ENCODE measurements at regions of chr10 and their contacts with region 1.

Region 1: DNA sequence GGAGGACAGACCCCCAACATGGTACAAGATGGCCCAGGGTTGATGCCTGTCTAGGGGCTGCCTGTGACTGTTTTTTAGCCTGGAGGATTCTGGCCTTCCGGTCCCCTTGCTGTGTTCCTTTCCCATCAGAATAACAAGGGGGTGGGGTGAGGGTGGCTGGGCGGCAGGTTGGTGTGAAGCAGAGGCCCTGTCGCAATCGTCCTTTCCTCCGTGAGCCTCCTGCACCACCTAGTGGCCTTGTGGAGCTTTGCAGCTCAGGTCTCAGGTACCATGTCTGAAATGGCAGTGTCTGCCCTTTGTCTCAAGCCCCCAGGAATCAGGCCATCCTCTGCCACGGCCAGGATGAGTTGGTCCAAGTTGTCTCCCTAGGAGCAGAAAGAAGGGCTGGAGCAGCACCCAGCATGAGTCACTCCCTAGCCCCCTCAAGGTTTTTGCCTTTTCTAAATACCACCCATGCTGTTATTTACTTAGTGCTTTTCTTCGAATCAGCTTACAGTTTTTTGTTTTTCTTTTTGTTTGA is 24.2 kb downstream of the TACR2 start:
- DNase-seq: peak; percentile 64 to 90 (median 81)
- ATAC-seq: peak; percentile 100
- H3K4me3 ChIP-seq: no peak overlapping the region
- H3K4me3 Mint-ChIP-seq: no peak overlapping the region
- H3K27ac ChIP-seq: peak overlapping the region in 1 of 2 experiments; percentile 24
- H3K27ac Mint-ChIP-seq: peak overlapping the region; percentile 62
- H3K4me1 ChIP-seq: peaks cover 5% of the 10 kb centered on the region
- H3K4me1 Mint-ChIP-seq: peaks cover 19% of the 10 kb centered on the region
- H3K27me3 ChIP-seq: no peaks in the 10 kb centered on the region
- H3K27me3 Mint-ChIP-seq: no peaks in the 10 kb centered on the region
- CTCF ChIP-seq: peak; percentile 87

Region 2: DNA sequence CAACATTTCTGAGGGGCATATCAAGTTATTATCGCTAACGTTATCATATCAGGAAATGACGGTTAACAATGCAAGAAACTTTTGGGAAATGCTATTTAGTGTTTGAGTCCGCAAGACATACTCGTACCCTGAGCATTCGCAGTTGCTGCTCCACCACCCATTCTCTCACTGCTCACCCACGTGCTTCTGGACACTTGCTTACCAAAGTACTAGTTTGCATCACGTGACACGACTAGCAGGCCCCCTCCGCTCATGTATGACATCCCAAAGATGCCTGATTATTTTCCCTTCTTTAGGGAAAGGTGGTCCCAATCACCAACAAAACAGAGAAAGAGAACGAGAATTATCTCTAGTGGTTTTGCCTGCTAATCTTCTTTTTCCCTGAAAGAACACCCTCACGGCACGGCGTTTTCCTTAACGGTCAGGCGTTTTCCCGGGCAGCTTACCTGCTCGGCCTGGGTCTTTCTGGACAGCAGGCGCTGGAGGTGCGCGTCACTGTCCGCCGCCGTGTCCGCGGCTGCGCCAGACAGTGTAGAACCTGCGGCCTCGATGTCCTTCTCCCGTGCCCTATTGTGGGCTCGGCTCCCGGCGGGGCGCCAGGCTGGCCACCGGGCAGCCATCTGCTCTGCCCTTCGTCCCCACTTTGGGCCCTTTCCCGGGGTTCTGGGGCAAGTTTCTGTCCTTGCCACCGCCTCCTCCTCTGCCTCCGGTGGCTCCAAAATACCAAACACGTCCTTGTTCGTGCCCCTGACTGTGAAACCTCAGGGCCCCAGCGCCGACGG is 212.6 kb before region 1 on chr10 and contains the start of gene SUPV3L1:
- CTCF ChIA-PET with region 1: no interaction called
- POLR2A ChIA-PET with region 1: no interaction called
- intact Hi-C with region 1: loop called in 1 of 2 experiments (anchors 1 kb)
- DNase-seq: peak; percentile 71 to 96 (median 87)
- ATAC-seq: peak; percentile 70
- H3K4me3 ChIP-seq: peak within 1 kb of the TSS; percentile 88 to 90
- H3K4me3 Mint-ChIP-seq: peak within 1 kb of the TSS; percentile 91
- H3K27ac ChIP-seq: peak within 1 kb of the TSS; percentile 97 to 98
- H3K27ac Mint-ChIP-seq: peak within 1 kb of the TSS; percentile 99
- H3K4me1 ChIP-seq: peaks cover 24% of the 10 kb centered on the region
- H3K4me1 Mint-ChIP-seq: peaks cover 41% of the 10 kb centered on the region
- H3K27me3 ChIP-seq: no peaks in the 10 kb centered on the region
- H3K27me3 Mint-ChIP-seq: no peaks in the 10 kb centered on the region
- CTCF ChIP-seq: no peak
- total RNA-seq, gene SUPV3L1: 89.3 to 99.6 TPM

Region 3: DNA sequence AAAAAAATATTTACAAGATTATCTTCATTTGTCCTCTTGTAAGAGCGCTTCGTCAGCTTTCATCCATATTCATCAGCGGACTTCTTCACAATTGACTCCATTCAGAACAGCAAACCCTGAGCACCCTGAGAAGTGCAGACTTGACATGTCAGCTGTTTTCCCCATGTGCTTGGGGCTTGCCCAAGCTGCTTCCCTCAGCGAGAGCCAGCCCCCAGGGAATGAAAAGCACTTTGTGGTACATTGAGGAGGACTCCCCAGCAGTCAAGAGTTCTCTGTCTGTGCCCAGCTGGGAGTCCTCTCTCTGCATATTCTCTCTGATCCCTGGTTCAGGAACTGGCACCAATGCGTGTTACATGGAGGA is 149.7 kb before region 1 on chr10:
- CTCF ChIA-PET with region 1: interaction called, 165 read pairs
- POLR2A ChIA-PET with region 1: interaction called, 3 read pairs
- intact Hi-C with region 1: no loop called
- DNase-seq: no peak
- ATAC-seq: no peak
- H3K4me3 ChIP-seq: no peak overlapping the region
- H3K4me3 Mint-ChIP-seq: no peak overlapping the region
- H3K27ac ChIP-seq: no peak overlapping the region
- H3K27ac Mint-ChIP-seq: no peak overlapping the region
- H3K4me1 ChIP-seq: peaks cover under 1% of the 10 kb centered on the region
- H3K4me1 Mint-ChIP-seq: no peaks in the 10 kb centered on the region
- H3K27me3 ChIP-seq: no peaks in the 10 kb centered on the region
- H3K27me3 Mint-ChIP-seq: no peaks in the 10 kb centered on the region
- CTCF ChIP-seq: no peak

Region 4: DNA sequence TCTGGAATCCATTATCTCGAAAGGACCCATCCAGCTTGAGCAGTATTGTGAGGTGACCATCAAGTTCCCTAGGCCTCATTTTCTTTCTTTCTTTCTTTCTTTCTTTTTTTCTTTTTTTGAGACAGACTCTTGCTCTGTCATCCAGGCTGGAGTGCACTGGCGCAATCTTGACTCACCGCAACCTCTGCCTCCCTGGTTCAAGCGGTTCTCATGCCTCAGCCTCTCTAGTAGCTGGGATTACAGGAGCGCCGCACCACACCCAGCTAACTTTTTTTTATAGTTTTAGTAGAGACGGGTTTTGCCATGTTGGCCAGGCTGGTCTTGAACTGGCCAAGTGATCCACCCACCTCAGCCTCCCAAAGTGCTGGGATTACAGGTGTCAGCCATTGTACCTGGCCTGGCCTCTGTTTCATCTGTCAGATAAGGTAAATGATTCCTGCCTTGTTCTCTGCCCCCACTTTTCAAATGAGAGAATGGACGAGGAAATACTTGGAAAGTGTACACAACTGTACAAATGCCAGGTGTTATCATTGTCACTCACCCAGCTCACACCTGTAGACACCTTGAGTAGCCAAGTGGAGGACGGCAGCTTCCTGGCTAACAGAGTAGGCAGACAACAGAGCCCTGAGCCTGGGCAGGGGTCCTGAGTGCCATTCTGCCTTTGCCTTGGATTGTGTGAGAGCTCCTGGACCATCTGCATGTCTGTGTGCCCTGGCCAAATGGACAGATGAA is 60.1 kb before region 1 on chr10:
- CTCF ChIA-PET with region 1: no interaction called
- POLR2A ChIA-PET with region 1: no interaction called
- intact Hi-C with region 1: no loop called
- DNase-seq: no peak
- ATAC-seq: no peak
- H3K4me3 ChIP-seq: no peak overlapping the region
- H3K4me3 Mint-ChIP-seq: no peak overlapping the region
- H3K27ac ChIP-seq: no peak overlapping the region
- H3K27ac Mint-ChIP-seq: no peak overlapping the region
- H3K4me1 ChIP-seq: peaks cover 42% of the 10 kb centered on the region
- H3K4me1 Mint-ChIP-seq: peaks cover 69% of the 10 kb centered on the region
- H3K27me3 ChIP-seq: no peaks in the 10 kb centered on the region
- H3K27me3 Mint-ChIP-seq: no peaks in the 10 kb centered on the region
- CTCF ChIP-seq: no peak

Region 5: GRCh38 chr10:69403519-69403918 is 11.0 kb after region 1 on chr10:
- CTCF ChIA-PET with region 1: interaction called, 21 read pairs
- POLR2A ChIA-PET with region 1: interaction called, 5 read pairs
- intact Hi-C with region 1: no loop called
- DNase-seq: no peak
- ATAC-seq: no peak
- H3K4me3 ChIP-seq: no peak overlapping the region
- H3K4me3 Mint-ChIP-seq: no peak overlapping the region
- H3K27ac ChIP-seq: no peak overlapping the region
- H3K27ac Mint-ChIP-seq: no peak overlapping the region
- H3K4me1 ChIP-seq: peaks cover 8% of the 10 kb centered on the region
- H3K4me1 Mint-ChIP-seq: peaks cover 12% of the 10 kb centered on the region
- H3K27me3 ChIP-seq: no peaks in the 10 kb centered on the region
- H3K27me3 Mint-ChIP-seq: no peaks in the 10 kb centered on the region
- CTCF ChIP-seq: no peak

Measured in CD8-positive, alpha-beta T cell (primary cell).